Aorta (tissue), 5 donors: ENCODE measurements at regions of chr12 and their contacts with region 1.

Region 1: DNA sequence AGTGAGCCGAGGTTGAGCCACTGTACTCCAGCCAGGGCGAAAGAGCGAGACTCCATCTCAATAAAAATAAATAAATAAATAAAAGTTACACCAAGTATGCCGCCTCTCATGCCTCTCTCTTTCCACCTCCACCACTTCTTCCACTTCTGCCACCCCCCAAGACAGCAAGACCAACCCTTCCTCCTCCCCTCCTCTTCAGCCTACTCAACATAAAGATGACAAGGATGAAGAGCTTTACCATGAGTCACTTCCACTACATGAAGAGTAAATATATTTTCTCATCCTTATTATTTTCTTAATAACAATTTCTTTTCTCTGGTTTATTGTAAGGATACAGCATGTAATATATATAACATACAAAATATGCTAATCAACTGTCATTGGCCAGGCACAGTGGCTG is 3.6 kb upstream of the TMED2 start:
- DNase-seq: no peak
- ATAC-seq: no peak
- H3K4me3 ChIP-seq: no peak overlapping the region
- H3K27ac ChIP-seq: no peak overlapping the region
- H3K4me1 ChIP-seq: peaks cover 0 to 1% of the 10 kb centered on the region in 2 donors
- H3K27me3 ChIP-seq: no peaks in the 10 kb centered on the region

Region 2: DNA sequence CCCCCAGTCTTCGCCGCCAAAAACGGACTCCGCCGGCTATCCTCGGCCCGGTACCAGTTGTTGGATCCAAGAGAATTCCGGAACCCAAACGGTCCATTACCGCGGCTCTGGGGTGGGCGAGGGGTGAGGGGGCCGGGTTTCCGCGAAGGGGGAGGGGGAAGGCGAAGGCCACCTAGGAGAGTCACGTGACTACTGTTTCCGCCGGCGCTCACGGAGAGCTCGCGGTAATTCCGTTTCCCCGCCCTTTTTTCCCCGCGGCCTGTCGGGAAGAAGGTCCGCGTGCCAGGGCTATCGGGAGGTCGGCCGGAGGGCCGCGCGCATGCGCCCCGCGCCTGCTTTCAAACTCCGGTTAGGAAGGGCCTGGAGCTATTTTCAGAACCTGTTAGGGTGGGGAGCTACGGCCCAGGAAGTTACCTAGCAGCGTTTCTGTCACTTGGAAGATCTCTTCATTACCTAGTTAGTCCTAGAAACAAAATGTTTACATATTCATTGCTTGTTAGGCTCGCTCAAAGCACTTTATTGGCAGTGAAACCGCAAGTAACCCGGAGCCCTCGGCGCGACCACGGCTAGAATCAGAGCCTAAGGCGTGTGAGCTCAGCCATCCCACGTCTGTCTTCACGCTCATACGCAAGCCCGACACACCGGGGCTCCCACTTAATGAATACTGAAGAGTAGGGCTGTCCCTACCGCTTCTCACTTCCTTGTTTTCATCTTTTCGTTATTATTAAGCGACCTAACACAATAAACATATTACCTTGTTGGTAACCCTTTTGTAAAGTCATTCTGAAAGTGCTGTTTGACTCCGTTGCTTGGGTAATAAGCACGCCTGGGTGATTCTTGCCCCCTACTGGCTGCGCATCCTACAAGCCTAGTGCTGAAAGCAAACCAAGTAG is 215.5 kb before region 1 on chr12:
- intact Hi-C with region 1: loop called in 1 of 2 experiments (anchors 5 kb)
- DNase-seq: peak; percentile 99
- ATAC-seq: peak; percentile 97
- H3K4me3 ChIP-seq: peak overlapping the region; percentile 61 to 91
- H3K27ac ChIP-seq: peak overlapping the region; percentile 73 to 95
- H3K4me1 ChIP-seq: no peaks in the 10 kb centered on the region
- H3K27me3 ChIP-seq: no peaks in the 10 kb centered on the region

Region 3: DNA sequence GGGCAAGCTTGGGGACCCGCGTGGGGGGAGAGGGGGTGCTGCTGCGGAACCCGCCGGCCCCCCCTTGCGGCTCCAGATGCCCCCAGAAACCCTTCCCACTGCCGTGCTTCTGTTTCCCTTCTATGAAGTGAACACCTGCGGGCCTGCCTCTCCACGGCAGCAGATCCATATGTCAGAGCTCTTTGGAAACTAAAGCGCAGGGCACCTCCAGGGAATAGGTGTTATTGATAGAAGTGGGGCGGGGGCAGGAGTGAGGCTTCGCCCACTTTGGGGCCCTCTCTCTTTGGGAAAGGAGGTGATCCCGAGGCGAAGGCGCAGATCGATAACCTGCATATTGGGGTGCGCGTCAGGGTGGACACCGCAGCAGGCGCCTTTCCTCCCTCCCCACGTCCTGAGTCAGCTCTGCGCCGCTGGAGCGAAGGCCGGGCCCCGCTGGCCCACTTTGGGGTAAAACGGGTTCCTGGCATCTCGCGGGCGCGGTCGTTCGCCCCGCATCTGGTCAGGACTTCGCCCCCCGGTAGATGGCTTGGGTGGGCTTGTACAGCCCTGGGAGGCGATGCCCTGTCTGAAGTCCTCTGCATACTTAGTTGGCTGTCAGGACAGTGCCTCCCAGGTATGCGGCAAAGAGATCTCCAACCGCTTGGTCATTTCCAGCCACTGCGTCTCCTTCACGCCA is 196.3 kb before region 1 on chr12:
- intact Hi-C with region 1: loop called in 1 of 2 experiments (anchors 5 kb)
- DNase-seq: no peak
- ATAC-seq: no peak
- H3K4me3 ChIP-seq: peak overlapping the region; percentile 66
- H3K27ac ChIP-seq: peak overlapping the region in 1 of 2 donors; percentile 34
- H3K4me1 ChIP-seq: no peaks in the 10 kb centered on the region
- H3K27me3 ChIP-seq: no peaks in the 10 kb centered on the region

Region 4: DNA sequence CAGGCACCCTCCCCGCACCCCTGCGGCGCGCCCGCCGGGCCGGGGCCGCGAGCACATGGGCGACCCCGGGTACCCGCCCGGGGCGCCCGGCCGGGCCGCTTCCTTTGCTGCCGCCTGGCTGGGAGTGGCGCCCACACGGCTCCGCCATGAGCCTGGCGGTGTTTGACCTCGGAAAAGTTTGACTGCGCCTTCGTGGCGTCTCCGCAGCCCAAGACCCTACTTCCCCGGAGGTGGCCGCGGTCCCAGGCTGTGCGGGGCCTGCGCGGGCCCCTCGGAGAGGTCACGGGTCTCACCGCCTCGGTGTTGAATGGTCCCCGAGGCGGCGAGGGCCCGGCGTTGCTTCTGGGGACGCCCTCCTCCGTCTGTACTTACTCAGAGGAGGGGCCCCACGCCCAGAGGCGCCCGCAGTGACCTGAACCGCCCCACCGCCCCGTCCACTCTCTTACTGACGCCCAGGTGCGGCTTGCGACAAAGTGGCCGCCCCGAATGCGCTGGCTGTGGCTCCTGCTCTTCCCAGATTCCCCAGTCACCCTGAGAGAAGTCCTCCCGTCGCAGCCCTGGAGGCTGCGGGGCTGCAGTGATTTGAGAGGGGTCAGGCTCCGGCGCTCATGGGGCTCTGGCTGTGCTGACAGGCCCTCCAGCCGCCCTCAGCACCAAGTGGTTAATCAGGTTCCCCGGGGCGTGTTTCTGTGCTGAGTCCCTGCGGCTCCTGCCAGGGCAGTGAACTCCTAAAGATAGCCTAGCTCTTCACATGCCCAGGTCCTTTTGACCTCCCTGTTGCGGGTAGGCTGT is 191.0 kb before region 1 on chr12:
- intact Hi-C with region 1: loop called (anchors 5 kb)
- DNase-seq: peak; percentile 65 to 83
- ATAC-seq: peak; percentile 59
- H3K4me3 ChIP-seq: peak overlapping the region; percentile 96 to 97
- H3K27ac ChIP-seq: peak overlapping the region; percentile 49 to 94
- H3K4me1 ChIP-seq: no peaks in the 10 kb centered on the region
- H3K27me3 ChIP-seq: no peaks in the 10 kb centered on the region

Region 5: DNA sequence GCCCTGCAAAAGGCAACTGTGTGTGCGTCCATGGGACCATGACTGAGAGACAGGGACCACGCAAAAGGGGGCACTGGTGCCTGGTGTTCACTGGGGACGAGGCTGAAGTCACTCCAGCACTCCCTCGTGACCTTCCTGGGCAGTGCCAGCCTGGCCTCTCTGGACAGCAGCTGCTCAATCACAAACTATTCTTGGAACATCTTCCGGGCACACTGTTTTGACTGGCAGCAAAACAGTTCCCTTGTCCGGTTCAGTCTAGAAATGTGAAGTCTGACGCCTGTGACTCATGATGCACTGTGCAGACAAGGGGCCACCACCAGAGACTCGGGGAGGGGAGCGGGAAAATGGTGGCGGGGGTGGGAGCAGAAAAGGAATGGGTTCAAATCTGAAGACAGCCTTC is 102.0 kb before region 1 on chr12:
- intact Hi-C with region 1: loop called in 1 of 2 experiments (anchors 1 kb)
- DNase-seq: peak; percentile 87 to 90
- ATAC-seq: peak; percentile 89
- H3K4me3 ChIP-seq: no peak overlapping the region
- H3K27ac ChIP-seq: peak overlapping the region; percentile 86 to 87
- H3K4me1 ChIP-seq: peaks cover 0 to 6% of the 10 kb centered on the region in 2 donors
- H3K27me3 ChIP-seq: no peaks in the 10 kb centered on the region

Region 6: DNA sequence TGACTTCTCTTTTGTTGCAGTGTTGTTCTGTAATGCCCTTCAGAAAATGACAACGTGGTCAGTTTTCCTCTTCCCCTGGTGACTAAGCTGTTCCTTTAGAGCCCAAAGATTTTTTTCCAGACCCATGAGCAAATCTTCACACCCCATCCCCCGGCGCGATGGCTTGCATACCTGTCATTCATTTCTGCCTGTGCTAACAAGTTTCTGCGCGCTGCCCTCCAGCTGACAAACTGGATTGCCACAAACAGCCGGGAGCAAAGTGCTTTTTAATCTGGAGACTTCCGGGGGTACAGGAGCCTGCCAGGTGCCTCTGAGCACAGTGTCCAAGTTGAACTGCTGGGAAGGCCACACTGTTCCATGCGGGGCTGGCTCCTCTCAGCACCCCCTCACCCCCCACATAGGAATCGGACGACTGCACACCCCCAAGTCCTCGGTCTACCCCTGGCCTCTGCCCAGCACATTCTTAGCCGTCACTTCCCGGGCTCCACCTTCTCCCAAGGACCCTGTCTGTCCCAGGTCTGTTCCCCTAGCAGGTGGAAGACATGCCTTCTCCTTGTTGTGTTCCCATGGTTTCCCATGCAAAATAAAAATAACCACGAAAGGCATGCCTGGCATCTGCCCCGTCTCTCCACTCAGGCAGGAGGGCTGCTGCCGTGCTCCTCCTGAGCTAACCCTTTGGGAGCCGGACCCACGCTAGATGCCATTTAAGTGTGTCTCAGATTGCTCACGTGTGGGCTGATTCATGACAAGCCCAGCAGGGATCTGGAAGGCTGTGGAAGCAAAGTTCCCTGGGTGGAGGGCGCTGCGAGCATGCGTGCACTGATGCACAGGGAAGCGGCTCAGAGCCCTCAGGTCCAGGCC is 61.4 kb before region 1 on chr12:
- intact Hi-C with region 1: loop called in 1 of 2 experiments (anchors 5 kb)
- DNase-seq: peak; percentile 82 to 89
- ATAC-seq: peak; percentile 70
- H3K4me3 ChIP-seq: no peak overlapping the region
- H3K27ac ChIP-seq: peak overlapping the region; percentile 17 to 93
- H3K4me1 ChIP-seq: no peaks in the 10 kb centered on the region
- H3K27me3 ChIP-seq: no peaks in the 10 kb centered on the region

Region 7: GRCh38 chr12:123533672-123534643 is 46.8 kb before region 1 on chr12 and contains the start of gene RILPL1:
- intact Hi-C with region 1: loop called (anchors 5 kb)
- DNase-seq: peak; percentile 71 to 85
- ATAC-seq: peak; percentile 73
- H3K4me3 ChIP-seq: peak within 1 kb of the TSS; percentile 85 to 91
- H3K27ac ChIP-seq: peak within 1 kb of the TSS; percentile 89 to 90
- H3K4me1 ChIP-seq: peaks cover 4 to 5% of the 10 kb centered on the region in 2 donors
- H3K27me3 ChIP-seq: no peaks in the 10 kb centered on the region
- total RNA-seq, gene RILPL1: 28.8 to 33.3 TPM